Activated CD4-positive, alpha-beta T cell treated with anti-CD3 and anti-CD28 coated beads for 36 hours (primary cell): ENCODE measurements at regions of chr1 and their contacts with region 1.

Region 1: DNA sequence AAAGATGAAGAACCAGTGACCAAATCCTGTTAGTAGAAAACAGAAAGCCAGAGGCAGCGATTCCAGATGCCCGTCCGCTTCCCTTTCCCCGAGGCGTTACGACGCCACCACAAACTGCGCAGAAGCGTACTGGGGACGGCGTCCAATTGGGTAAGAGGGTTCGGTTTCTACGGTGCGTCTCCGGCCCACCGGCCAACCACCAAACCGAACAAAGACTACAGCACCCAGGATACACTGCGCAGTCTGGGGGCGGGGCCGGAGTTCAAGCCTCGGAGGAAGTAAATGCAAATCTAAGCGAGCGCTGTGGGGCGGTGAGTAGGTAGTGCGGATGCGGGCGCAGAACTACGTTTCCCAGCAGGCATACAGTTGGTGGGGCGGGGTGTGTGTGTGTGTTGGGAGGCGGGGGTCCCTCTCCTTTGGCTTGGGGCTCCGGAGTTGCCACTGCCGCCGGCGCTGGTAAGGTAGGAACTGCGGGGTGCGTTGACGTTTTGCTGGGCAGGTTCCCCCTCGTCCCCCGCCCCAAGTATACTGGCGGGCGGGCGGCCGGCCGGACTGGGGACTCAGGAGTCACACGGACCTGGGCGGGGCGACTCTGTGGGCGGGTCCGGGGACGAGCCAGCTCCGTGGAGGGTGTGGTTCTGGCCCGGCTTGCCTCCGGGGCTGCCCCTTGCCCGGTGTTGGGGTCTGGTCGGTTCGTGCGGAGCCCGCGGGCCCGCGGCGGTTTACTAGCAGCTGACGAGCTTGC is at the starts of genes SWT1 and TRMT1L:
- DNase-seq: peak; percentile 99
- ATAC-seq: peak; percentile 94
- H3K4me3 Mint-ChIP-seq: peak within 1 kb of the TSS; percentile 91
- H3K27ac Mint-ChIP-seq: peak within 1 kb of the TSS; percentile 95
- H3K4me1 Mint-ChIP-seq: peaks cover 50% of the 10 kb centered on the region
- H3K27me3 Mint-ChIP-seq: no peaks in the 10 kb centered on the region
- total RNA-seq, gene SWT1: 3.0 to 3.3 TPM
- total RNA-seq, gene TRMT1L: 33.7 to 38.7 TPM

Region 2: GRCh38 chr1:184051485-184052193 is 1105.4 kb before region 1 on chr1 and contains the start of gene TSEN15:
- CTCF ChIA-PET with region 1: no interaction called
- POLR2A ChIA-PET with region 1: no interaction called
- intact Hi-C with region 1: loop called in 1 of 2 experiments (anchors 5 kb)
- DNase-seq: peak; percentile 89
- ATAC-seq: peak; percentile 97
- H3K4me3 Mint-ChIP-seq: peak within 1 kb of the TSS; percentile 93
- H3K27ac Mint-ChIP-seq: peak within 1 kb of the TSS; percentile 99
- H3K4me1 Mint-ChIP-seq: peaks cover 33% of the 10 kb centered on the region
- H3K27me3 Mint-ChIP-seq: peaks cover 9% of the 10 kb centered on the region
- total RNA-seq, gene TSEN15: 44.1 to 47.3 TPM

Region 3: DNA sequence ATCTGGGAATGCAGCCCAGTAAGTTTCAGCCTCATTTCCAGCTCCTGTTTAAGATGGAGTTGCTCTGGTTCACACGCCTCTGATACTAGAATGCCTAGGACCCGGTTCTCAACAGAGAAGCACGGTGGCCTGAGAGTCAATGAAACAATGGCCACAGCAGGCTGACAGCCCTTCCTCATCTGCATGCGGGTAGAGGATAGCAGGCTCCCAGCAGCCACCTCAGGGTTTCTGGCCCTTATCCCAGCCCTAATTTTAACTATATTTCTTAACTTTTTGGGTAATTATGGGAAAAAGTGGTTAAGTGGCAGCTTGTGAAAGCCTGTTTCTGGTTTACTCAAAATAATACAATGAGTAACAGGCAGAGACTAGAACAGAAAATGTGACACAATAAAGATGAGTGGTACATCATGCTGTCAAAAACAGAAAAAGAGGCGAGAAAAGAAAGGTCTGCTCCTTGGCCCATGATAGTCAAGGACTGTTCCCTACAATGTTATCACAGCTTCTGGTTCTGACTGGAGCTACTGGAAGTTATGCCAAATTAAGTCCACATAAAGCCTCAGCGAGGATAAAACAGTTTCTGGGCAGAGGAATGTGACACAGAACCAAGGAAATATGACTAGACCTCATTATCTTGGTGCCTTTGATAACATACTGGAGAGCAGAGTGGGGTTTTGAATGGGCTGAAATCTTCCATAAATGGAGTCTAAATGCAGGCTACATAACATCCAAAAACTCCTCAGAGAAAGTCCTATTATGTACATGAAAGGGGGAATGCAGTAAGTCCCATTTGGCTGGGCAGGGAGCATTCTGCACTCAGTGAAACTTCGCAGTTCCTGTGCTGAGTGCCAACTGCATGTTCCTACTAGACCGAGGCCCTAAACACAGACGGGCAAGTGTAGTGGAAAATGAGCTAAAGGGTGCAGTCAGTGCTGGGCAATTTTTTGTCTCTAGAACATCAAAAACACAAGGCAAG is 274.8 kb before region 1 on chr1:
- CTCF ChIA-PET with region 1: no interaction called
- POLR2A ChIA-PET with region 1: no interaction called
- intact Hi-C with region 1: loop called in 1 of 2 experiments (anchors 2 kb)
- DNase-seq: peak; percentile 50
- ATAC-seq: peak; percentile 79
- H3K4me3 Mint-ChIP-seq: peak overlapping the region; percentile 5
- H3K27ac Mint-ChIP-seq: peak overlapping the region; percentile 90
- H3K4me1 Mint-ChIP-seq: peaks cover 27% of the 10 kb centered on the region
- H3K27me3 Mint-ChIP-seq: peaks cover 6% of the 10 kb centered on the region

Region 4: GRCh38 chr1:185170291-185170848 is 13.3 kb after region 1 on chr1:
- CTCF ChIA-PET with region 1: interaction called, 44 read pairs
- POLR2A ChIA-PET with region 1: no interaction called
- intact Hi-C with region 1: no loop called
- DNase-seq: peak; percentile 53
- ATAC-seq: peak; percentile 89
- H3K4me3 Mint-ChIP-seq: no peak overlapping the region
- H3K27ac Mint-ChIP-seq: no peak overlapping the region
- H3K4me1 Mint-ChIP-seq: peaks cover 7% of the 10 kb centered on the region
- H3K27me3 Mint-ChIP-seq: no peaks in the 10 kb centered on the region

Region 5: DNA sequence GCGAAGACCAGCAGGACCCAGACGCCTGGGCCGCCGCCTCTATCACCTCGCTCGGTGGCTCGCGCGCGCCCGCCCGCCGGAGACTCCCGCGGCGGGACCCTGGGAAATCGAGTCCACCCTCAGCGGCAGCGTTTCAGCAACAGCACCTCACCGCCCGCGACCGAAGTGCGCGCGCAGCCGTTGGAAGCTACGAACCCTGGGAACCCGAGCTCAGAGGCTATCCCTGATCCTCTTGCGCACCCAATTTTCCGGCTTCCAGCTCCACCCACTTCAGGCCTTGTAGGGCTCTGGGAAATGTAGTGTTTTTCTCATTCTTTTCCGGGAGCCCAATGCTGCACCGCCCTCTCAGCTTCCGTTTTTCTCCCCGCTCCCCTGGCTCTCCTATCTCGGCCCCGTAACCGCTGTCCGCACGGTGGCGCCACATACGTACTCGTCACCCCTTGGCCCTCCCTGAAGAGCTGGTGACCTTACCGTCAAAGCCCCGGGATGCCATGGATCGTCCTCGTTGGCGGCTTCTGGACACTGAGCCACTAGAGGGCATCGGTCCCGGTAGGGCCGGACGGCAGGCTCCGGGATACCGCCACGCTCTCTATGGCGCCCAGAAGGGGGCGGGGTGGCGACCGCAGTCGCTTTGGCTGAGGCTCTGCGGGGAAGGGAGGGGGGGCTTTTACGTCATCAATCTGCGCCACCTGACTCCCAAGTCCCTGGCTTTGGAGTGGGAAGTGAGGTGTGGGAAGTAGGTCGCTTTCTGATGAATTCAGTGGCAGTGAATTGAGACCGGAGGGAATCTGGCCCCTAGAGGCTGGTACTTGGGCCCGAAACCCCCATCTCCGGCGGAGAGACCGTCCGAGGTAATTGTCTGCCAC is 1218.3 kb after region 1 on chr1 and contains the starts of genes ODR4 and TPR:
- CTCF ChIA-PET with region 1: no interaction called
- POLR2A ChIA-PET with region 1: no interaction called
- intact Hi-C with region 1: loop called in 1 of 2 experiments (anchors 1 kb)
- DNase-seq: peak; percentile 97
- ATAC-seq: peak; percentile 90
- H3K4me3 Mint-ChIP-seq: peak within 1 kb of the TSS; percentile 98
- H3K27ac Mint-ChIP-seq: peak within 1 kb of the TSS; percentile 98
- H3K4me1 Mint-ChIP-seq: peaks cover 37% of the 10 kb centered on the region
- H3K27me3 Mint-ChIP-seq: no peaks in the 10 kb centered on the region
- total RNA-seq, gene ODR4: 13.1 to 14.0 TPM
- total RNA-seq, gene TPR: 151 to 152 TPM